PC-9 (cell line): ENCODE measurements at regions of chr9 and their contacts with region 1.

Region 1: DNA sequence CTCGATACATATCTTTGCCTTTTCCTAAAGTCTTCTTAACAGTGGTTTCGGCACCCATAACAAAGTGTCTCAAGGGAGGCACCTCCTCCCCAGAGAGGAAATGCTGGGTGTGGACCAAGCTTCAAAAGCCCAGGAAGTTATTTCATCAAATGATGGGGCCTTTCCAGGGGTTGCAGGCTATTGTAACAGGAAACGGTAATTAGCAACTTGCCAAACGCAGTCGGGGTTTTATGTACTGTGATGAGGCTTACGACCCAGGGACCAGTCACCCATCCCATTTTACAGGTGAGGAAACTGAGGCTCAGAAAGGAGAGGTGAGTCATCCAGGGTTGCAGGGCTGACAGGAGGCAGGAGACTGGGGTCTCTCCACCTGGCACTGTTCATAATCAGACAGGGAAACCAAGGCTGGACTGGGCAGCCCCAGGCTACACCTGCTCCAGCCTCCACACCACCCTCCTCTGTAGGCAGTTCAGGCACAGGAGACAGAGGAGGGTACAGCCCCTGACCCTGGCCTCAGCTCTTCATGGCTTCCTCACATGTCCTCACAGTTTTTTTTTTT is 30.0 kb upstream of the SUSD3 start:
- DNase-seq: no peak
- H3K4me3 ChIP-seq: no peak overlapping the region
- H3K27ac ChIP-seq: no peak overlapping the region
- H3K4me1 ChIP-seq: no peaks in the 10 kb centered on the region
- H3K27me3 ChIP-seq: no peaks in the 10 kb centered on the region
- CTCF ChIP-seq: no peak

Region 2: GRCh38 chr9:92706216-92706940 is 322.1 kb before region 1 on chr9:
- CTCF ChIA-PET with region 1: no interaction called
- POLR2A ChIA-PET with region 1: no interaction called
- intact Hi-C with region 1: no loop called
- DNase-seq: peak in 1 of 2 experiments; percentile 53
- H3K4me3 ChIP-seq: no peak overlapping the region
- H3K27ac ChIP-seq: peak overlapping the region; percentile 53
- H3K4me1 ChIP-seq: 0 out of 2 replicates have a peak, but pooled peaks cover 5% of the 10 kb centered on the region
- H3K27me3 ChIP-seq: no peaks in the 10 kb centered on the region
- CTCF ChIP-seq: peak; percentile 44

Region 3: DNA sequence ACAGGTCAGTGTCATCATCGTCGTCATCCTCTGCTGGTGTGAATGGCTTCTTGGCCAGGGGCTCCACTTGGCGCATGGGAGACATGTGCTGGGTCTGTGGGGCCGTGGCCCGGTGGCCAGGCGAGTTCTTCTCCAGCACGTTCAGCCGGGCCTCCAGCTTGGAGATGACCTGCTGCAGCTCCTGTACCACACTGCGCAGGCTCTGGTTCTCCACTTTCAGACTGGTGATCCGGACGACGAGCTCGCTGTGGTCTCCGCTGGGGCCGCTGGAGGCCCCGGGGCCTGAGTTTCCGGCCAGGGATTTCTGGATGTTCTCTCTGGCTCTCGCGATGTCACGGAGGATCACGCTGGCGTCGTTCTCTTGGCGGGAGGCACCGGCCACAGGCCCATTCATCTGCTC is 191.3 kb before region 1 on chr9:
- CTCF ChIA-PET with region 1: no interaction called
- POLR2A ChIA-PET with region 1: interaction called, 12 read pairs
- intact Hi-C with region 1: no loop called
- DNase-seq: no peak
- H3K4me3 ChIP-seq: no peak overlapping the region
- H3K27ac ChIP-seq: no peak overlapping the region
- H3K4me1 ChIP-seq: no peaks in the 10 kb centered on the region
- H3K27me3 ChIP-seq: no peaks in the 10 kb centered on the region
- CTCF ChIP-seq: no peak

Region 4: DNA sequence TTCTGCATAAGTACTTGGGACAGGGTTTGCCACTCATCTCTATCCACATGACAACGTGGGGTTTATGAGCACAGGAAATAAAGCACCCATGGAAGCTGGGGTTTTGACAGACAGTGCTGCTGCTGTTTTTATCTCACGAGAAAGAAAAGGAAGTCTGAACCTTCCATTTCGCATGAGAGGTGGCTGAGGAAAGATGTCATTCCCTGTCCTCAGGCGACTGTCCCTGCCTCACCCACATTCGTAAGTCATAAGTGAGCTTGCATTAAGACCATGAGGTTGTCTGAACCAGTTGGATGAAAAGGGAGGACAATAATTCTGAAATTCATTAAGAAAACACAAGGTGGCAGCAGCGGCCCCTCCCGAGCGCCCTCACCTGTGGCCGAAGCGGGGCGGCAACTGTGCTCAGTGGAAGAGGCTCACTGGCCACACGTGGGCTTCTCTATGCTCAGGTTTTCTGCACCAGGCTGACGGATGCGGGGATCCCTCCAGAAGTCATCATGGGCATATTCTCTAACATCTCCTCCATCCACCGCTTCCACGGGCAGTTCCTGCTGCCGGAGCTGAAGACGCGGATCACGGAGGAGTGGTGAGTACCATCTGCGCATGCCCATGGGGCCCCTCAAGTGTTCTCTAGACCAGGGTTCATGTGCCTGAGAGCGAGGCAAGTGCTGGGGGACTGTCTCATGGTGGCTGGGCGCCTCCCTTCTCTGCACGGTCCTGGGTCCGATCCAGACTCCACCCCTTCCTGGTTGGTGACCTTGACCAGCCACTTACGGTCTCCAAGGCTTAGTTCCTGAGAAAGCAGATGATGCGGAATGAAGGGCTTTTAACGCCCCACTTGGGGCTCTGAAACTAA is 24.7 kb before region 1 on chr9:
- CTCF ChIA-PET with region 1: no interaction called
- POLR2A ChIA-PET with region 1: no interaction called
- intact Hi-C with region 1: no loop called
- DNase-seq: peak; percentile 58 to 72
- H3K4me3 ChIP-seq: no peak overlapping the region
- H3K27ac ChIP-seq: peak overlapping the region; percentile 62
- H3K4me1 ChIP-seq: peaks cover 13% of the 10 kb centered on the region
- H3K27me3 ChIP-seq: no peaks in the 10 kb centered on the region
- CTCF ChIP-seq: peak; percentile 79

Region 5: GRCh38 chr9:93013856-93014582 is 14.5 kb before region 1 on chr9:
- CTCF ChIA-PET with region 1: interaction called, 17 read pairs
- POLR2A ChIA-PET with region 1: no interaction called
- intact Hi-C with region 1: no loop called
- DNase-seq: no peak
- H3K4me3 ChIP-seq: no peak overlapping the region
- H3K27ac ChIP-seq: no peak overlapping the region
- H3K4me1 ChIP-seq: no peaks in the 10 kb centered on the region
- H3K27me3 ChIP-seq: no peaks in the 10 kb centered on the region
- CTCF ChIP-seq: no peak

Region 6: GRCh38 chr9:93041108-93041802 is 12.7 kb after region 1 on chr9:
- CTCF ChIA-PET with region 1: no interaction called
- POLR2A ChIA-PET with region 1: no interaction called
- intact Hi-C with region 1: no loop called
- DNase-seq: no peak
- H3K4me3 ChIP-seq: no peak overlapping the region
- H3K27ac ChIP-seq: no peak overlapping the region
- H3K4me1 ChIP-seq: no peaks in the 10 kb centered on the region
- H3K27me3 ChIP-seq: no peaks in the 10 kb centered on the region
- CTCF ChIP-seq: no peak

Region 7: GRCh38 chr9:93141771-93142483 is 113.4 kb after region 1 on chr9:
- CTCF ChIA-PET with region 1: no interaction called
- POLR2A ChIA-PET with region 1: interaction called, 12 read pairs
- intact Hi-C with region 1: no loop called
- DNase-seq: no peak
- H3K4me3 ChIP-seq: no peak overlapping the region
- H3K27ac ChIP-seq: no peak overlapping the region
- H3K4me1 ChIP-seq: 0 out of 2 replicates have a peak, but pooled peaks cover 3% of the 10 kb centered on the region
- H3K27me3 ChIP-seq: no peaks in the 10 kb centered on the region
- CTCF ChIP-seq: no peak

Region 8: DNA sequence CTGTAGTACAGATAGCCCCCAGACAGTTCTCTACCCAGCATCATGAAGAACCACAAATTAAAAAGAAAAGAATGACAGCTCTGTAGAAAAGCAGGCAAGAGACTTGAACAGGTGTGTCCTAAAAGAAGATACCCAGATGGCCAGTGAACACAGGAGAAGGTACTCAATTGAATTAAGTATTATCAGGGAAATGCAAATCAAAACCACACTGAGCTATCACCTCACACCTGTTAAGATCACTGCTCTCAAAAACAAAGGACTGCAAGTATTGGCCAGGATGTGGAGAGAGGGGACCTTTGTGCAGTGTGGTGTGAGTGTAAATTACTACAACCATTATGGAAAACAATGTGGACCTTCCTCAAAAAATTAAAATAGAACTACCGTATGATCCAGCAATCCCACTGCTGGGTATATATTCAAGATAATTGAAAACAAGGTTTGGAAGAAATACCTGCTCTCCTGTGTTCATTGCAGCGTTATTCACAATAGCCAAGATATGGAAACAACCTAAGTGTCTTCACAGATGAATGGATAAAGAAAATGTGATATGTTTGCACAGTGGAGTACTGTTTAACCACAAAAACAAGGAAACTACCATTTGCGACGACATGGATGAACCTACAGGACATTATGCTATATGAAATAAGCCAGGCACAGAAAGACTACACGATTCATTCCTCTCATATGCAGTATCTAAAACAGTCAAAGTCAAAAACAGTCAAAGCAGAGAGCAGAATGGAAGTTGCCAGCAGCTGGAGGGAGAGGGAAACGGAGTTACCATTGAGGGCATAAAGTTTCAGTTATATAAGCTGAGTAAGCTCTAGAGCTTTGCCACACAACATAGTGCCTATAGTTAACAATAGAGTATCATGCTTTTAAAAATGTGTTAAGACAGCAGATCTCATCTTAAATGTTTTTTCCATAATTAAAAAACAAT is 258.0 kb after region 1 on chr9:
- CTCF ChIA-PET with region 1: no interaction called
- POLR2A ChIA-PET with region 1: no interaction called
- intact Hi-C with region 1: no loop called
- DNase-seq: peak in 1 of 2 experiments; percentile 39
- H3K4me3 ChIP-seq: no peak overlapping the region
- H3K27ac ChIP-seq: no peak overlapping the region
- H3K4me1 ChIP-seq: peaks cover 19% of the 10 kb centered on the region
- H3K27me3 ChIP-seq: no peaks in the 10 kb centered on the region
- CTCF ChIP-seq: no peak